ENCODE measurements at regions of chr18 and their contacts with region 1.

Region 1: DNA sequence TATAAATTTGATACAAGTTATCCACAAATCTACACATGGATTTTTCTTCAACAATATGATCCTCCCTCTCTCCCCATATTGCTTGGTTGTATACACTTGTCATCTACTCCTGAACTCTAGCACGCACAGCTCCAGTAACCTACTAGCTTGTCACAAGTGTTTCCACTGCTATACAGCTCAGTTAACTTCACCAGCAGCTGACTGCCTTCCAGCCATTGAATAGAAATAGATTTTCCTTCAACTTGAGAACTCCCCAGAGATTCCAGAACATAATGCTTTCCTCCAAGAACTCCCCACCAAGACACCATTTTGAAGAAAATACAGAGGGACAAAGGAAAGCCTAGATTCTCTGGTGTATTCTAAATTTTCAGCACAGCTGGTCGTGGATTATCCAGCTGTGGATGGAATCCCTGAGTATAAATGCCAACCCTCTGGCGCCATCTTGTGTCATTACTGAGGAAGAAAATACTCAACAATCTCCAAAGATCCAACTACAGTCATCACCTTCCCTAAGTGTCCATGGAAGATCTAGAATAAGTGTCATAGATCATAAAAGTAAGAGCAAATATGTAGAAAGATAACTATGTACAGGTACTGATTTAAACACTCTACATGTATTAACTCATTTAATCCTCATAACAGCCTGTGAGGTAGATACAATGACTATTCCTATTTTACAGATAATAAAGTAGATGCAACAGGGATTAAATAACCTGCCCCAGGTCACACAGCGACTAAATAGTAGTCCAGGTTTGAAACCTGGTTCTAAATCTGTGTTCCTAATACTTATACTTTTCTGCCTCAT is 156.7 kb downstream of the ARHGAP28 start:
- DNase-seq: peak; percentile 32
- H3K4me3 ChIP-seq: no peak overlapping the region
- H3K27ac ChIP-seq: no peak overlapping the region
- H3K4me1 ChIP-seq: no peaks in the 10 kb centered on the region
- H3K27me3 ChIP-seq: peaks cover 3% of the 10 kb centered on the region
- CTCF ChIP-seq: peak; percentile 60 to 71

Region 2: DNA sequence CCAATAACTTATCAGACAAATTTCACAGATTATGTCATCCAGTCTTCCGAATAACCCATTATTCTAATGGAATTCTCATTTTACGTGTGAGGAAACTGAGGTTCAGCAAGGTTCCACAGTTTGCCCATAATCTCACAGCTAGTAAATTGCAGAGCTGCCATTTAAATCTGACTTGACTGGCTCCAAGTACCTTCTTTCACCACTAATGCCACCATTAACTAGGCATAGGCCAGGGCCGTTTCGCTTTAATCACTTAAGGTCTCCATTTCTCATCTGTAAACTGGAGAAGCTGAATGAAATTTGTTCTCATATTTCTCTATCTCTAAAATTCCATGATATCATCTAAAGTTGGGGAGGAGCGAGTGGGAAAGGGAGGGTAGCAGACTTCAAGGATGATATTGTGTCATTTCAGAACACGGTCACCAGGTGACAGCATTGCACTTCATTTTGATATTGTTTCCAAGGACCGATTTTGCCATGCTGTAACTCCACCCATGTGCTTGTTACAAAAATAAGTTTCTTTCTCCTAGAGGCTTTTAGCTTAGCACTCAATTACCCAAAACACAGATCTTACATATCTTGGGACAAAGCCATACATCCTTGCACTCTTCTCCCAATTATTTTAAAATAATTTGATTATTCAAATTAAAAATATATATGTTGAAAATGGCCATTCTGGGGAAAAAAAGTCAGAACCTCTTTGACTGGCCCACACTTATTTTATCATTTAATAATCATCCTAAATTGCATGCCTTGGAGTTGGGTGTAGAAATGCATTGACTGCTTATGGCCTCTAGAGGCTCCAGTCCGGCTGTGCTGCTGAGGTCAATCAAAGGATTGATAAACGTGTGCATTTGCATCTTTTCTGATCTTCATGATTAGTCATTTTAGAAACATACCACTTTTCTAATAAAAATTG is 1812.9 kb before region 1 on chr18:
- CTCF ChIA-PET with region 1: no interaction called
- dilution Hi-C with region 1: no loop called
- in situ Hi-C with region 1: no loop called
- intact Hi-C with region 1: loop called (anchors 5 kb)
- DNase-seq: peak; percentile 4
- H3K4me3 ChIP-seq: no peak overlapping the region
- H3K27ac ChIP-seq: no peak overlapping the region
- H3K4me1 ChIP-seq: no peaks in the 10 kb centered on the region
- H3K27me3 ChIP-seq: no peaks in the 10 kb centered on the region
- CTCF ChIP-seq: peak; percentile 34 to 54

Region 3: GRCh38 chr18:5890331-5891183 is 995.6 kb before region 1 on chr18:
- CTCF ChIA-PET with region 1: no interaction called
- dilution Hi-C with region 1: no loop called
- in situ Hi-C with region 1: loop called in 1 of 2 experiments (anchors 25 kb)
- intact Hi-C with region 1: no loop called
- DNase-seq: no peak
- H3K4me3 ChIP-seq: no peak overlapping the region
- H3K27ac ChIP-seq: no peak overlapping the region
- H3K4me1 ChIP-seq: no peaks in the 10 kb centered on the region
- H3K27me3 ChIP-seq: peaks cover 17% of the 10 kb centered on the region
- CTCF ChIP-seq: peak in 1 of 2 donors; percentile 13

Region 4: DNA sequence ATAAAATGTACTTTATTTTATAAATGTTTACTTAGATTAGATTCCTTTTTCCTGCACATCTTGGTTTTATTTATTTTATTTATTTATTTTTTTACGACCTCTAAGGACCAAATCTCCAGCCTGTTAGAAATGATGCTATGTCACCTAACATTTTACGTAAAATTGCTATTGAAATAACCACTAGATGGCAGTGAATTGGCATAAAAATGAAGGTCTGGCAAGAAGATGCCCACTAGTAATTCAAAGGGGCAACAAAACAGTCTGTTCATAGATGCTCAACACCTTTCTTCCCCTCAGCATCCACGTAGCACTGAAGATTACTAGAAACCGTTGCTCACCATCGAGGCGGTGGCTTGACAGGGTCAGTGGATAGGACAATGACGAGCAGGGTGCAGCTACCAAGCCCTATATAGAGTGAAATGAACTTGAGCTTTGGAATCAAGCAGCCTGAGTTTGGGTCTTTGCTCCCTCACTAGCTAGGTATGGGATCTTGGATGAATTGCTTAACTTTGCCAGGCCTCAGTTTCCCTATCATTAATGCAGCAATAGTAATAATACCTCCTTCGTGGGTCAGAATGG is 342.8 kb before region 1 on chr18:
- CTCF ChIA-PET with region 1: interaction called, 3 read pairs
- dilution Hi-C with region 1: no loop called
- in situ Hi-C with region 1: loop called in 1 of 2 experiments (anchors 10 kb)
- intact Hi-C with region 1: loop called (anchors 1 kb)
- DNase-seq: peak; percentile 27
- H3K4me3 ChIP-seq: no peak overlapping the region
- H3K27ac ChIP-seq: no peak overlapping the region
- H3K4me1 ChIP-seq: no peaks in the 10 kb centered on the region
- H3K27me3 ChIP-seq: no peaks in the 10 kb centered on the region
- CTCF ChIP-seq: peak; percentile 42 to 60

Region 5: DNA sequence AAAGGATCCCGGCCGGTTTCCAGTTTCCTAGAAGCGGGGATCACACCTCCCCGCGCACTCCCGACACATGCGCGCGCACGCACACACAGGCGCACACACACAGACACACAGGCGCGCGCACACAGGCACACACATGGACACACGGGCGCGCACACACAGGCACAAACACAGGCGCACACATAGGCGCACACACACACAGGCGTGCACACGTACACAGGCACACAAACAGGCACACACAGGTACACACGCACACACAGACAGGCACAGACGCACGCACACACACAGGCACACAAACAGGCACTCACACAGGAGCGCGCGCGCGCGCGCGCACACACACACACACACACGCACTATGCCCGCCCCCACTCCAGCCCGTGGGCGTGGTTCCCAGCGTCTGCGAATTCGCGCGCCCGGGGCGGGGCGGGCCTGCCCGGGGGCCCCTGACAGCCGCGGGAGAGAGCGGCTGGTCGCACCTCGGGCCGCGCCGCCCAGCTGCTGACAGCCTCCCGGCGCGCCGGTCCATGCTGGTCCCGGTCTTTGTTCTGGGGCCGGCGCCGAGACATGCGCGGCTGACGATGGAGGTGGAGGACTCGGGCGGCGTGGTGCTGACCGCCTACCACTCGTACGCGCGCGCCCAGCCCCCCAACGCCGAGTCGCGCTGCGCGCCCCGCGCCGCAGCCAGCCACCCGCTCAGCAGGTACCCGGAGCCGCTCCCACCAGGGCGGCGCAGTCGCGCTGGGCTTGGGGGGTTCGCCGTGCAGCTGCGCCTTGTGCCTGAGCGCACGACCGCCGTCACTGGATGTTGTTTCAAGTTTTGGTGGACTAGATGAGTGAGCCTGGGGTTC is 156.7 kb before region 1 on chr18 and contains the start of gene ARHGAP28:
- CTCF ChIA-PET with region 1: no interaction called
- dilution Hi-C with region 1: no loop called
- in situ Hi-C with region 1: no loop called
- intact Hi-C with region 1: loop called (anchors 5 kb)
- DNase-seq: peak; percentile 89
- H3K4me3 ChIP-seq: peak within 1 kb of the TSS; percentile 52 to 62 (median 55)
- H3K27ac ChIP-seq: no peak within 1 kb of the TSS
- H3K4me1 ChIP-seq: peaks cover 16% of the 10 kb centered on the region
- H3K27me3 ChIP-seq: no peaks in the 10 kb centered on the region
- CTCF ChIP-seq: peak in 1 of 2 donors; percentile 34
- total RNA-seq, gene ARHGAP28: 0.38 to 9.0 TPM